ENCODE measurements at regions of chr3 and their contacts with region 1.

Region 1: DNA sequence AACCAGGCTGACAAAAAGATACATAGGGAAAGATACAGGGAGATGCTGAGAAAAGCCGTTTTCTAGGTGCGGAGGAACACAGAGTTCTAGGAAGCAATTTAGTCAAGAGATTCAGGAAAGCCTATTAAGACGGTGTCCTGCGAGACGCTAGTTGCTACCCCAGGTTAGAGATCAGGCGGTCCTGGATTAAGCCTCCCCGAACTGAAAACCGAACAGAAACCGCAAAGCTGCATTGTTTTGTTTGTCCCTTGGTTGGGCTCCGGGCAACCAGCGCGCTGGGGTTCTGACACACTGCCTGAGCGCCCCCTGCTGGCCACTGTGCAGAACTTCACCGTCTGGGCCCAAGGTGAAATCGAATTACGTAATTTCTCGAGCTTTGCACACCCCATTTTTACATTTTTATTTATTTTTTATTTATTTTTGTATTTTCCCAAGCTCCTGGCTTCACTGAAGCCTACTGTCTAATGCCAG is 37.3 kb upstream of the NDUFB4 start:
- DNase-seq: peak; percentile 91
- H3K4me3 Mint-ChIP-seq: peak overlapping the region; percentile 72
- H3K27ac Mint-ChIP-seq: no peak overlapping the region
- H3K4me1 Mint-ChIP-seq: peaks cover 19% of the 10 kb centered on the region
- H3K27me3 Mint-ChIP-seq: peaks cover 8% of the 10 kb centered on the region

Region 2: DNA sequence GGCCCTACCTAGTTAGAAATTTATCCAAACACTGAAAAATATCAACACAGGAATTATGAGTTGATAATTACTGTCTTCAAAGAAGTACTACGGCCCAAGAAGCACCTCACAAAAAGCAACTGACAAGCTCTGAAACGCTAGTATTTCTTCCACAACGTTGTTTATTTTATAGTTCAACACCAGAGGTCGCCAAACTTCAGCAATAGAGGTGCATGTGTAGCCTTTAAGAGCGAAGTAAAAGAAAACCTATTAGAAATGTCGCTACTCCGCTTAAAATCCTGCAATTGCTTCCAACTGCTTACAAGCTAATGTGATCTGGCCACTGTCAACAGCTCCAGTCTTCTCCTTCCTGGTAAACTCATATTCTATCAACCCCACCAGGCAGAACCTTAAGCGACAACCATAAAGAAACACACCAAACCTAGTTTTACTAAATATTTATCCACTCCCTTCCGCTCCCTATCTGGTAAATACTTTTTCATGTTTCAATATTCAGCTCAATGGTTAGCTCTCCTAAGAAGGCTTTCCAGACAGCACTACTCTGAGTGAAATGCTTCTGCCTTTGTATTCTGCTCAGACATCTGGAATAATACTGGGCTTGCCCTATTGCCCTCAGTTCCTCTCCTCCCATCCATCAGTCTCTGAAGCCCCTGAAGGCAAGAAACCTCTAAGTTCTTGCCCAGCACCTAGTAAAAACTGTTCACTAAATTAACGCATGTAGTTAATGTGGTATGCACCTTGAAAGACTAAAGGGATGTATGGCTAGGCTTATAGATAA is 666.7 kb before region 1 on chr3:
- CTCF ChIA-PET with region 1: no interaction called
- intact Hi-C with region 1: loop called (anchors 5 kb)
- DNase-seq: peak; percentile 59
- H3K4me3 Mint-ChIP-seq: no peak overlapping the region
- H3K27ac Mint-ChIP-seq: no peak overlapping the region
- H3K4me1 Mint-ChIP-seq: peaks cover 17% of the 10 kb centered on the region
- H3K27me3 Mint-ChIP-seq: no peaks in the 10 kb centered on the region

Region 3: DNA sequence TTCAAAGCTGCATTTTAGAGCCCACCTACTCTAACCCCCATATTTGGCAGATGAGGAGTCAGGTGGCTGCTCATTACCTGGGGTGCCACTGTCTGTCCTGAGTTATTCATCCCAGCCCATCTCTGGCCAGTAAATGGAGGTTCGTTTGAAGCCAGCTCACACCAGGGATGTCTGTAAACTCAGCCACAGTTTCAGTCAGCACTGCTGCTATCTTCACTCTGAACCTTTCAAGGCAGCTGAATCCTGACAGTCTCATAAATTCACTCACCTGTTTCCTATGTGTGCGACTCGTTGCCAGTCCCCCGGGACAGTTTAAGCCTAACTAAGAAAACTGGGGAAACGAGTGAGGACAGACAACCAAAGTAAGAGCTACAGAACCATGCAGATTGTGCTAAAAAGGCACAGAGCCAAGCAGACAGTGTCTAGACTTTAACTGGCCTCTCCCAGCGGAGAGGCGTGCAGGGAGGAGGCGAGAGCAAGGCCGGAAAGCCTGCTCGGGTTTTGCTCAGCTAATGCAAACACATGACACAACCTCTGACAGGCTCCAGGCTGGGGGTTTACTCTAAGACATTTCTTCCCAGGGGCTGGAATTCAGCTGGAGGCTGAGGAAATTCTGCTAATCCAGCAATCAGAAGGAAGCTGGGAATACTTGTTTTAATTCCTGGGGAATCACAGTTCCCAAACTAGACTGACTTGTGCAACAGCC is 120.0 kb before region 1 on chr3:
- CTCF ChIA-PET with region 1: interaction called, 3 read pairs
- intact Hi-C with region 1: loop called (anchors 5 kb)
- DNase-seq: no peak
- H3K4me3 Mint-ChIP-seq: no peak overlapping the region
- H3K27ac Mint-ChIP-seq: no peak overlapping the region
- H3K4me1 Mint-ChIP-seq: no peaks in the 10 kb centered on the region
- H3K27me3 Mint-ChIP-seq: peaks cover 3% of the 10 kb centered on the region

Region 4: DNA sequence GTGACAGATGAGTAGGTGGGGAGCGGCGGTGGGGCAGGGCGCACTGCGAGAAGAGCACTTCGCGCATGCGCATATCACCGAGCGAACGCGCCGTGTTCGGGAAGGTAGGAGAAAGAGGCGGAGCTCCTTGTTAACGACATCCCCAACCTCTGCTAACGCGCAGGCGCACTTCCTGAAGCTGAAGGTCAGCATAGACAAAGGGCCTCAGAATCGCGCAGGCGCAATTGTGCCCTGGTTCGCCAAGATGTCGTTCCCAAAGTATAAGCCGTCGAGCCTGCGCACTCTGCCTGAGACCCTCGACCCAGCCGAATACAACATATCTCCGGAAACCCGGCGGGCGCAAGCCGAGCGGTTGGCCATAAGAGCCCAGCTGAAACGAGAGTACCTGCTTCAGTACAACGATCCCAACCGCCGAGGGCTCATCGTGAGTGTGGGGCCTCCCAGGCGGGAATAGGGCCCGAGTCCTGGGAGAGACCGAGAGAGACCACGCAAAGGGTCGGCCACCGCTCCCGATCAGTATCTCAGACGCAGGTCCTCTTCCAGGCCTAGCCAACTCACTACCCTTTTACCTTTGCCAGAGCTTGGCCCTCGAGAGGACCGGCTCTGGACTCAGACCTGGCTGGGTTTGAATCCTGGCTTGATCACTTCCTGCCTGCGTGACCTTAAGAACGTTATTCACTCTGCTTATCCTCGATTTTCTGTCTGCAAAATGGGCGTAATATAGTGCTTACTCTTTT is 37.5 kb after region 1 on chr3 and contains the start of gene NDUFB4:
- CTCF ChIA-PET with region 1: interaction called, 9 read pairs
- intact Hi-C with region 1: loop called (anchors 1 kb)
- DNase-seq: peak; percentile 97
- H3K4me3 Mint-ChIP-seq: peak within 1 kb of the TSS; percentile 86
- H3K27ac Mint-ChIP-seq: peak within 1 kb of the TSS; percentile 95
- H3K4me1 Mint-ChIP-seq: peaks cover 7% of the 10 kb centered on the region
- H3K27me3 Mint-ChIP-seq: no peaks in the 10 kb centered on the region
- total RNA-seq, gene NDUFB4: 146 to 152 TPM

Region 5: GRCh38 chr3:120795017-120795648 is 236.3 kb after region 1 on chr3:
- CTCF ChIA-PET with region 1: interaction called, 42 read pairs
- intact Hi-C with region 1: loop called (anchors 1 kb)
- DNase-seq: peak; percentile 93
- H3K4me3 Mint-ChIP-seq: no peak overlapping the region
- H3K27ac Mint-ChIP-seq: no peak overlapping the region
- H3K4me1 Mint-ChIP-seq: peaks cover 11% of the 10 kb centered on the region
- H3K27me3 Mint-ChIP-seq: peaks cover 3% of the 10 kb centered on the region

Region 6: GRCh38 chr3:121165397-121165837 is 606.6 kb after region 1 on chr3:
- CTCF ChIA-PET with region 1: no interaction called
- intact Hi-C with region 1: no loop called
- DNase-seq: no peak
- H3K4me3 Mint-ChIP-seq: no peak overlapping the region
- H3K27ac Mint-ChIP-seq: no peak overlapping the region
- H3K4me1 Mint-ChIP-seq: no peaks in the 10 kb centered on the region
- H3K27me3 Mint-ChIP-seq: no peaks in the 10 kb centered on the region